Endothelial cell of umbilical vein (primary cell): ENCODE measurements at regions of chr1 and their contacts with region 1.

Region 1: DNA sequence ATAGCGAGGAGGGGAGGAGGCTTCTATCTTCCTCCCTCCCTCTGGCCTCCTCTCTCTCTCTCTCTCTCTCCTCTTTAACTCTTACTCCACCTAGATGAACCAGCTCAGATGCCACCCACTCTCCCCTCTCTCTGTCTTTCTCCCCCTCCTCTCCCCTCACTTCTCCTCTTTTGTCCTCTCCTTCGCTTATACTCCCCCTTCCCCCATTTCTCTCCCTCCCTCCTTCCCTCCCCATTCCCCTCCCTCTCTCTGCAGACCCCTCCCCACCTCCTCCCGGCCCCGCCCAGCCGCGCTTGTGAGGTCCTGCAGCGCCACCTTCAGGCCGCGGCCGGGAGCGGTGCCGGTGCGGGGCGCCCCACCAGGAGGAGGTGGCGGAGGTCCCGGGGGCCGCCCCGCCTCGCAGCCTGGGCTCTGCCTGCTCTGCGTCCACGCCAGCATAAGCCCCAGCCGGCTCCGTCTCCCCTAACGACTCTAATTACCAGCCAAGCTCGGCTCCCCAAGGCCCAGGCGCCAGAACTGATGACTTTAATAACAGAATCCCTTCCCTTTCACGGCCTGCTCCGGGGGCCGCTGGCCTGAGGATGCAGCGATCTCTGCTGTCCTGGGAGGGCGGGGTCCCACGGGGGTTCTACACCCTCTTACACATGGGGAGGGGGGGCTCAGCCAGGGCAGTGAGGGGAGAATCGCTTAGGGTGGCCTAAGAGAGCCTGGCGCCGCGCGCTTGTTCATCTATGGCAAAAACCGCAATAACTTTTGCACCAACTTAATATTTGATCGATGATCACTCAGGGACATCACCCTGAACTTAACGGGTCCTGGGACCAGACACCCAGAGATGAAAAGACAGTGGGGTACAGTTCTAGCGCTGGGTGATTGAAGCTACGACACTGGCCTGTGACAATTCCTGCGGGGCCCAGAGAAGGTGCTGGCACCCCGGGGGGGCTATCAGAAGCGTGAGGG is 637.3 kb downstream of the MATN1 start:
- DNase-seq: peak; percentile 17
- H3K4me3 ChIP-seq: no peak overlapping the region
- H3K27ac ChIP-seq: no peak overlapping the region
- H3K4me1 ChIP-seq: peaks cover 17% of the 10 kb centered on the region
- H3K27me3 ChIP-seq: no peaks in the 10 kb centered on the region
- CTCF ChIP-seq: peak; percentile 52 to 64
- POLR2A ChIP-seq: no peak

Region 2: DNA sequence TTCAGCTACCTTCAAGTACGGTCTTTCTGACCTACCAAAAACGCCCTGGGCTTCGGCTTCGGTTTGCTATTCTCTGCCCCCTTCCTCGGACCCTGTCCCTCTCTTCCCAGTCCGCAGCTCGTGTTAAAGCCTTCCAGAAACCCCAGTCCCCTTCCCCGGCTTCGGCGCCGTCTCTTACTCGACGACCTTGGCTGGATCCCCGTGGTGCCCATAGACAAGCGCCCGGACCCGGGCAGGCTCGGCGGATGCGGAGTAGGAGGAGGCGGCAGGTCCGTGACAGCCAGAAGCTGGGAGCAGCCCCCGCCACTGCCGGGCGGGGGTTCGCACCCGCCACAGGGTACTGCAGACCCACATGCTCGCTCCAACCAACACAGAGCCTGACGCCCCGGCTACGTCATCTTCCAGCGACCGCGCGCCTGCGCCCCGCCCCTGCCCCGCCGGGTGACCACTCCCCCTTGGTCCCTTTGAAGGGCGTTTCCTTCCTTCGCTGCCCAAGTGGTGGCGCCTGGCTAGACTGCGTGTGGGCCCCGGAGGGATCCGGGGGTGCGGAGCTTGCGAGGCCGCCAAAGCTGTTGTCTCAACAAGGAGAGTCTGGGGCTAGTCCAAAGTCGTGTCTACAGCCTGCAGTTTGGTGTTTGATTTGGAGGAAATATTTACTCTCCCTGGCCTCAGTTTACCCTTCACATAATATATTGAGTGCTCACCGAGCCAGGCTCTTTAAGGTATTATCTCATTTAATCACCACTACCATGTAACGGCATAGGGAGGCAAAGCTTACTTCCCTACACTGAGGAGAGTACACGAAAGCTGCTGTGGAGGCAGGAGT is 855.3 kb before region 1 on chr1 and contains the start of gene MECR:
- CTCF ChIA-PET with region 1: no interaction called
- POLR2A ChIA-PET with region 1: no interaction called
- dilution Hi-C with region 1: loop called (anchors 25 kb)
- intact Hi-C with region 1: no loop called
- DNase-seq: peak; percentile 94
- H3K4me3 ChIP-seq: peak within 1 kb of the TSS; percentile 81 to 87 (median 85)
- H3K27ac ChIP-seq: peak within 1 kb of the TSS; percentile 51
- H3K4me1 ChIP-seq: peaks cover 8% of the 10 kb centered on the region
- H3K27me3 ChIP-seq: peaks cover 2 to 11% of the 10 kb centered on the region in 2 experiments
- CTCF ChIP-seq: no peak
- POLR2A ChIP-seq: peak; percentile 92
- total RNA-seq, gene MECR: 30.1 and 33.5 TPM in 2 replicates

Region 3: DNA sequence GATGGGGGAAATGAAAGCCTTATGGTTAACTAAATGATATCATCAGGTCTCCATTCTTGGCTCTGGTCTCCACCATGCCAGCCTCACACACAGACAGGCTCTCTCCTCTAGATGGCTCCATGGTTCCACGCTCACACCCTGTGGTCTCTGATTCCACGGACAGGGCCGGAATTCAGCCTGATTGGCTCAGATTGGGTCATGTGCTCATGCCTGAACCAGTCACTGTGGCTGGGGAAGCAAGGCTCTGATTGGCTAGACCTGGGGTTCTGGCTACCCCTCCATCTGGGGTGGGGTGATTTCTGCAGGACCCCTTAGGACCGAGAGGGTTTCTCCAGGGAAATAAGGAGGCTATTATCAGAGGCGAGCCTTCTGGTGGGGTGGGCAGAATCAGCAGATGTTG is 572.7 kb before region 1 on chr1:
- CTCF ChIA-PET with region 1: interaction called, 3 read pairs
- POLR2A ChIA-PET with region 1: no interaction called
- dilution Hi-C with region 1: no loop called
- intact Hi-C with region 1: loop called (anchors 1 kb)
- DNase-seq: peak; percentile 45
- H3K4me3 ChIP-seq: no peak overlapping the region
- H3K27ac ChIP-seq: no peak overlapping the region
- H3K4me1 ChIP-seq: no peaks in the 10 kb centered on the region
- H3K27me3 ChIP-seq: no peaks in the 10 kb centered on the region
- CTCF ChIP-seq: peak; percentile 50 to 51
- POLR2A ChIP-seq: no peak

Region 4: DNA sequence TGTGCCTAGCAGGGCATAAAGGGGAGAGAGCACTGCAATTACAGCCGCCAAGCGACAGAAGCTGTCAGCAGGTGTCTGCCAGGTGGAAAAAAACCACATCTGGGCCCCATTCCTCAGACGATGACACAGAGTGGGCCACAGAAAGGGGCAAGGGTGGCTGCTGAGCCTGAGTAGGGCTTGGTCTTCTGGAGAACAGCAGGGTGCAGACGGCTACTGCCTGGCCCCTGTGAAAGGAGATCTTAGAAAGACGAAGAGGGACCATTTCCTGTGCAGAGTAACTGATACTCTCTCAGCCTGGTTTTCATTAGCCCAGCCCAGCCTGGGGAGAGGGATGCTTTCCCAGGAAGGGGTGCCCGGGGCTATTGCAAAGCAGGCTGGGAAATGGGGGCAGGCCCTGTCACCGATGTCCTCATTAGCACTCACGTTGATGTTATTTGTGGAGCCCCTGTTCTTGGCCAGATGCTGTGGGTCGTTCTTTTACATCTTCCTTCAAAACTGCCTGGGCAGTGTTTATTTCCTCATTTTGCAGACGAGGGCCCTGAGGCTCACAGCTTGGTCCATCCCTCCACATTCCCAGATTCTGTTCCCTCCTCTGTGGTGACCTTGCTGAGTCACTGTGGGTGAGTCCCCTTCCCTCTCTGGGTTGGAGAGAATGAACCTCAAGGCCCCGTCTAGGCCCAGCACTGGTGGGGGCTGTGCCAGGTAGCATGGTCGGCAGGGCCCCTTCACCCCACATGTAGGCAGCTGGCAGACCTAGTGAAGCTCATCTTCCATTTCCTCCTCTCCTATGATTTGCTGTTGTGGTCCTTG is 377.0 kb before region 1 on chr1:
- CTCF ChIA-PET with region 1: interaction called, 3 read pairs
- POLR2A ChIA-PET with region 1: no interaction called
- dilution Hi-C with region 1: no loop called
- intact Hi-C with region 1: loop called (anchors 1 kb)
- DNase-seq: no peak
- H3K4me3 ChIP-seq: no peak overlapping the region
- H3K27ac ChIP-seq: peak overlapping the region; percentile 95
- H3K4me1 ChIP-seq: peaks cover 48% of the 10 kb centered on the region
- H3K27me3 ChIP-seq: peaks cover 10 to 12% of the 10 kb centered on the region in 2 experiments
- CTCF ChIP-seq: no peak
- POLR2A ChIP-seq: peak; percentile 60

Region 5: DNA sequence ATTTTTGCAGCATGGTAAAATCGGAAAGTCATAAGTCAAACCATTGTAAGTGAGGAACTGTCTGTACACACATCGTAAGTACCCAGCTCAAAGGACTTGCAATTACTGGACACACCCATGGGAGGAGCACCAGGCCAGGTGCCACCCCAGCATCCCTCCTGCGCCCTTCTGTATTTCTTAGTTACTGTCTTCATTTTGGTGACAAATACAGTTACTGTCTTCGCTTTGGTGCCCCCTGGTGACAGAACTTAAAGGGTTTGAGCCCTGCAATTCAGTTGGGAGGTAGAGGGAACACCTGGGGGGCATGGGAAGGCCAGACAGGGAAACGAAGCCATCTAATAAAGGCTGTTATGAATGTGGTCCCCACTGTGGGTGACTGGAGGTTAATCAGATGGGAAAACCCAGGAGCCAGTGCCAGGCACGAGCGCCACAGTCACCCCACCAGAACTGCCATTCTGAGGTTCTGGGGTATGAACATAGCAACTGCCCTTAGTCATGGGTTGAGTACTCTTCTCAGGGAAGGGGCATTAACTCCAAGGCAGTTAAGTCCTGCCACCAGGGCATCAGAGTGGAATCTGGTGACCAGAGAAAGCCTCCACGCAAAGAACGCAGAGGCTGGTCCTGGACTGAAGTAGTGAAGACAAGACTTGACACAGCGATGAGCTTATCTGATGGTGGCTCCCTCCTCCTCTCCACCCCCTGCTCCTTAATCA is 236.9 kb before region 1 on chr1:
- CTCF ChIA-PET with region 1: no interaction called
- POLR2A ChIA-PET with region 1: no interaction called
- dilution Hi-C with region 1: no loop called
- intact Hi-C with region 1: loop called (anchors 5 kb)
- DNase-seq: peak; percentile 21
- H3K4me3 ChIP-seq: no peak overlapping the region
- H3K27ac ChIP-seq: no peak overlapping the region
- H3K4me1 ChIP-seq: no peaks in the 10 kb centered on the region
- H3K27me3 ChIP-seq: no peaks in the 10 kb centered on the region
- CTCF ChIP-seq: peak; percentile 23 to 34
- POLR2A ChIP-seq: no peak

Region 6: DNA sequence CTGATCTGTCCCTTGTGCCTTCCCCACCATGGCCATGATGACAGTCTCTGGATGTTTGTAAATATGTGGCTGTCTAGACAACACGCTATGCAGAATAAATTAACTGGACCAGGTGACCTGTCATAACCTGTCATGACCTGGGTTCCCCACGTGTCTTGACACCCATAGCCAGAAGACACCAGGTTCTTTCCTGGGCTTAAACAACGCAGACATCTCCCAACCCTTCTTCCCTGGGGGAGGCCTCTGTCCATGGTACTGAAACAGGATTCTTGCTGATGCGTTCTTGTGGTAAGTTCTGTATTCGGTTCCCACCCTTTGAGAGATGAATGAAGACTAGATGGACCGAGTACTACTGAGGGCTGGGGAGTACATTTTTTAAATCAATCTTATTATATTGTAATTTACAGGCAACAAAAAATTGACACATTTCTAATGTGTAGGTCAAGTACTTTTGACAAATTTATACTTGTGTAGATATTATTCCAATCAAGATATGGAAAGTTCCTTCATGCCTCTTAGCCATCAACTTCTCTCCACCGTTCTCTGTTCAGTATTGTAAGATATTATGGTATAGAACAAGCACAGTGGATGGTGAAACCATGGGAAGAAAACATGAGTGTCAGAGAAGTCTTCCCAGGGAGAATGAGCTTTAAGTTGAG is 110.9 kb before region 1 on chr1:
- CTCF ChIA-PET with region 1: no interaction called
- POLR2A ChIA-PET with region 1: no interaction called
- dilution Hi-C with region 1: no loop called
- intact Hi-C with region 1: loop called (anchors 2 kb)
- DNase-seq: peak; percentile 4
- H3K4me3 ChIP-seq: no peak overlapping the region
- H3K27ac ChIP-seq: peak overlapping the region; percentile 81
- H3K4me1 ChIP-seq: peaks cover 6% of the 10 kb centered on the region
- H3K27me3 ChIP-seq: no peaks in the 10 kb centered on the region
- CTCF ChIP-seq: no peak
- POLR2A ChIP-seq: no peak

Region 7: GRCh38 chr1:30166174-30166573 is 80.1 kb after region 1 on chr1:
- CTCF ChIA-PET with region 1: no interaction called
- POLR2A ChIA-PET with region 1: no interaction called
- dilution Hi-C with region 1: no loop called
- intact Hi-C with region 1: no loop called
- DNase-seq: no peak
- H3K4me3 ChIP-seq: no peak overlapping the region
- H3K27ac ChIP-seq: no peak overlapping the region
- H3K4me1 ChIP-seq: no peaks in the 10 kb centered on the region
- H3K27me3 ChIP-seq: no peaks in the 10 kb centered on the region
- CTCF ChIP-seq: no peak
- POLR2A ChIP-seq: no peak